CD8-positive, alpha-beta T cell (primary cell): ENCODE measurements at regions of chr16 and their contacts with region 1.

Region 1: GRCh38 chr16:70523076-70523742 is at the start of gene COG4:
- DNase-seq: peak; percentile 83 to 95 (median 90)
- ATAC-seq: peak; percentile 80
- H3K4me3 ChIP-seq: peak within 1 kb of the TSS; percentile 73 to 97
- H3K4me3 Mint-ChIP-seq: peak within 1 kb of the TSS; percentile 99
- H3K27ac ChIP-seq: peak within 1 kb of the TSS; percentile 88 to 98
- H3K27ac Mint-ChIP-seq: peak within 1 kb of the TSS; percentile 100
- H3K4me1 ChIP-seq: peaks cover 39% of the 10 kb centered on the region
- H3K4me1 Mint-ChIP-seq: peaks cover 54% of the 10 kb centered on the region
- H3K27me3 ChIP-seq: no peaks in the 10 kb centered on the region
- H3K27me3 Mint-ChIP-seq: no peaks in the 10 kb centered on the region
- CTCF ChIP-seq: no peak
- total RNA-seq, gene COG4: 19.7 to 21.0 TPM

Region 2: DNA sequence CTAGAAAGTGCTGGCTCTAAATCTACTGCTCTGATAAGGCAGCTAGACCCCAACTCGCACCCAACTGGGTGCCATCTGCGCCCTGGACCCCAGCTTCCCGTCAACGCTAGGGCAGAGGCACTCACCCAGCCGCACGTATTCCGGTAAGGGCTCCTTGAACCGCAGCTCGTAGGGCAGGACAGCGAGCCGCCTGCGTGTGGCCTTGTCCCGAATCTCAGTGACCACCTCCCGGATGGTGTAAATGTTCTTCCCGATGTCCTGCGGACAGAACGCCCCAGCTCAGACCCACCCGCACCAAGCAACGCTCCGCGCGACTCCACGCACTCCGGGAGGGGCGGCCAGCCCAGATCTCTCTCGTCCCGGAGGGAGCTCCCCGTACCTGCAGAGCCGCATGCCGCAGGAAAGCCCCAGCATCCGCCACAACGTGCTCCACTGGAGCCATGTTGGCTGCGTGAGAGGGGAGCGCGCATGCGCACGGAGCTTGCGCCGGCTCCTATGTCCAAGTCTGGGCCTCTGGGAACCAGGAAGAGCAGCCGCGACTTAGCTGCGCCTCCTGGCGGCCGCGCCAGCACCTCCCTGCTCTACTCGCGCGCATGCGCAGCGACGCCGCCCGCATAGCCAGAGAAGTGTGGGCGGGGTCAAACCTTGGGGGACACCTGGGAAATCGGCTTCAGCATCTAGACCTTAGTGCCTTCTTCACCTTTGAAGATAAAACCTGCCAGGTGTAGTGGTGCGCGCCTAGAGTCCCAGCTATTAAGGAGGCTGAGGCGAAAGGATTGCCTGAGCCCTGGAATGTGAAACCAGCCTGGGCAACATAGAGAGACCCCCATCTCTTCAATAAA is 768.5 kb before region 1 on chr16 and contains the start of gene NOB1:
- CTCF ChIA-PET with region 1: no interaction called
- POLR2A ChIA-PET with region 1: no interaction called
- intact Hi-C with region 1: loop called in 1 of 2 experiments (anchors 5 kb)
- DNase-seq: peak; percentile 94 to 100 (median 98)
- ATAC-seq: peak; percentile 97
- H3K4me3 ChIP-seq: peak within 1 kb of the TSS; percentile 91 to 100
- H3K4me3 Mint-ChIP-seq: peak within 1 kb of the TSS; percentile 100
- H3K27ac ChIP-seq: peak within 1 kb of the TSS; percentile 78 to 84
- H3K27ac Mint-ChIP-seq: peak within 1 kb of the TSS; percentile 98
- H3K4me1 ChIP-seq: peaks cover 9% of the 10 kb centered on the region
- H3K4me1 Mint-ChIP-seq: peaks cover 29% of the 10 kb centered on the region
- H3K27me3 ChIP-seq: no peaks in the 10 kb centered on the region
- H3K27me3 Mint-ChIP-seq: no peaks in the 10 kb centered on the region
- CTCF ChIP-seq: peak; percentile 79
- total RNA-seq, gene NOB1: 46.4 to 48.0 TPM

Region 3: DNA sequence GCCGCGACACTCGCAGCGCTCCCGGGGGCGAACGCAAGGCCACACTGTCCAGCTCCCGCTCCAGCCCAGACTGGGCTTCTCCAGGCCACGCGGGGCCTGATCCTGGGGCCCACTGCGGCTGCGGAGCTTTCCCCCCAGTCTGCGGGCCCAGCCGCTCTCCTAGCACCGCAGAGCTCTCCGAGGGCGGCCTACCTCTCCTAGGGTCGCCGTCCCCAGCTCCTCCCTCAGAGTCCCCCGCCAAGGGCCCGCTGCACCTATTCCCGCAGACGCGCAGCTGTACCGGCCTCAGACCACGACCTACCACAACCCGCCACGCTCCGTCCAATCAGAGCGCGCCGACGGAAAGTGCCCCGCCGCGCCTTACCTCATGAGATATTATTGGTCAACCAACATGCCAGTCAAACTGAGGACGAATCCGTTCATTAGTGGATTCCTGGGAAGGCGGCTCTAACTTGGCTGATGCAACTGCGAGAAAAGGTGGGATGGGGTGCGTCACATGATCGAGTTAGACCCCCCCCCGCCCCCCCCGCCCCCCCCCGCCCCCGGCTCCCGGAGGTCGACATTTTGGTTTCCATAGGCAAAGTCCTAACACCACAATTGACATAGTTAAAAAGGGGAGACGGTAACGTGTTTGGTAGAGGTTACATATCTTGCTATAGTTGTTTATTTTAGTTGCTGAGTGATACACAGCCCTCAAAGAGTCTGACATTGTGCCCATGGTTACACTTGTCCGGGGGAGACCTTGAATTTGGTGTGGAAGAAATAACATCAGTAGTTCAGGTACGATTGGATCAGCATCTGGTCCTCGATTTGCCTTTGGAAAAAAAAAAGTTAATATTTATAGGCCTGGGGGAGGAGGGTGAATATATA is 233.7 kb before region 1 on chr16 and contains the start of gene AARS1:
- CTCF ChIA-PET with region 1: no interaction called
- POLR2A ChIA-PET with region 1: interaction called, 4 read pairs
- intact Hi-C with region 1: loop called (anchors 2 kb)
- DNase-seq: peak; percentile 87 to 99 (median 92)
- ATAC-seq: peak; percentile 93
- H3K4me3 ChIP-seq: peak within 1 kb of the TSS; percentile 75 to 81
- H3K4me3 Mint-ChIP-seq: peak within 1 kb of the TSS; percentile 100
- H3K27ac ChIP-seq: peak within 1 kb of the TSS; percentile 89 to 94
- H3K27ac Mint-ChIP-seq: peak within 1 kb of the TSS; percentile 99
- H3K4me1 ChIP-seq: peaks cover 10% of the 10 kb centered on the region
- H3K4me1 Mint-ChIP-seq: peaks cover 18% of the 10 kb centered on the region
- H3K27me3 ChIP-seq: no peaks in the 10 kb centered on the region
- H3K27me3 Mint-ChIP-seq: no peaks in the 10 kb centered on the region
- CTCF ChIP-seq: no peak
- total RNA-seq, gene AARS1: 10.1 to 10.6 TPM

Region 4: GRCh38 chr16:70348991-70349390 is 174.2 kb before region 1 on chr16:
- CTCF ChIA-PET with region 1: no interaction called
- POLR2A ChIA-PET with region 1: interaction called, 22 read pairs
- intact Hi-C with region 1: loop called (anchors 1 kb)
- DNase-seq: no peak
- ATAC-seq: no peak
- H3K4me3 ChIP-seq: no peak overlapping the region
- H3K4me3 Mint-ChIP-seq: no peak overlapping the region
- H3K27ac ChIP-seq: no peak overlapping the region
- H3K27ac Mint-ChIP-seq: peak overlapping the region; percentile 20
- H3K4me1 ChIP-seq: peaks cover 23% of the 10 kb centered on the region
- H3K4me1 Mint-ChIP-seq: peaks cover 33% of the 10 kb centered on the region
- H3K27me3 ChIP-seq: no peaks in the 10 kb centered on the region
- H3K27me3 Mint-ChIP-seq: no peaks in the 10 kb centered on the region
- CTCF ChIP-seq: no peak

Region 5: DNA sequence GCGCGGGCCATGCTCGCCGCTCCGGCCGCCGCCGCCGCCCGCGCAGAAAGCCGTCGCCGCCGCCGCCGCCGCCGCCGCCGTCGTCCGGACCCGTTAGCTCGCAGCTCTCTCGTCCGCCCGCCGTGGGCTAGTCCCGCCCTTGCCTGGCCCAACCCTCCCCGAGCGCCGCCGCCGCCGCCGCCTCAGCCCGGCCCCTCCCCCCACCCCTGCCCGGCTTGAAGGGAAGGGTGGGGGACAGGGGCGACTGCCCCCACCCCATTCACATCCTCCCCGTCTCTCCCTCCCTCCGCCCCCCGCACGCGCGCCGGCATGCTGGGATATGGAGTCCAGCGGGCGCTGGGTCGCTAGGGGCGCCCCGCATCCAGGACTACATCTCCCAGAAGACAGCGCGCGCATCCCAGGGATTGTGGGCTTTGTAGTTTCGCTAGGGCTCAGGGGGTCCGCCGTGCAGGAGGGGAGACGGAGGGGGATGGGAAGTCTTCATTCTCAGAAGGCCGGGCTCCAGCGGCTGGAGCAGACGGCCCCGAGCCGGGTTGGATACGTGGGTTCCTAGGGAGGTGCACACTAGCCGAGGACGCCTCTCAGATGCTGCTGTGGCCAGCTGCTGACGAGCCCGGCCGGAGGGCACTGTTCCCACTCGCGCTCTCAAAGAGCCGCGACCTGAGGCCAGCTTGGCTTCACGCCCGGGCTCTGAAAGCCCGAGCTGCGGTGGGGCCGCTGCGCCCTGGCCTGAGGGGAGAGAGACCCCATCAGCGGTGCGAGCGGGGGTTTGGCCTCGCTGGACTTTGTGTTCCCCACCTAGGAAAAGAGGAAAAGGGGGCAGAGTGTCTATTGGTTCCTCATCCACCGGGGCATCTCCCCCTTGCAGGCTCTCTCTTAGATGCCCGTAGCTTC is 84.0 kb before region 1 on chr16 and contains the start of gene ST3GAL2:
- CTCF ChIA-PET with region 1: no interaction called
- POLR2A ChIA-PET with region 1: interaction called, 5 read pairs
- intact Hi-C with region 1: loop called (anchors 1 to 2 kb)
- DNase-seq: peak; percentile 87 to 97 (median 94)
- ATAC-seq: peak; percentile 97
- H3K4me3 ChIP-seq: peak within 1 kb of the TSS; percentile 75 to 91
- H3K4me3 Mint-ChIP-seq: peak within 1 kb of the TSS; percentile 94
- H3K27ac ChIP-seq: peak within 1 kb of the TSS; percentile 48 to 65
- H3K27ac Mint-ChIP-seq: peak within 1 kb of the TSS; percentile 89
- H3K4me1 ChIP-seq: peaks cover 36% of the 10 kb centered on the region
- H3K4me1 Mint-ChIP-seq: peaks cover 39% of the 10 kb centered on the region
- H3K27me3 ChIP-seq: no peaks in the 10 kb centered on the region
- H3K27me3 Mint-ChIP-seq: no peaks in the 10 kb centered on the region
- CTCF ChIP-seq: no peak
- total RNA-seq, gene ST3GAL2: 5.6 to 6.1 TPM

Region 6: GRCh38 chr16:70737377-70738082 is 214.3 kb after region 1 on chr16:
- CTCF ChIA-PET with region 1: no interaction called
- POLR2A ChIA-PET with region 1: no interaction called
- intact Hi-C with region 1: loop called in 1 of 2 experiments (anchors 5 kb)
- DNase-seq: peak; percentile 56 to 93 (median 78)
- ATAC-seq: peak; percentile 82
- H3K4me3 ChIP-seq: peak overlapping the region; percentile 33 to 34
- H3K4me3 Mint-ChIP-seq: peak overlapping the region; percentile 77
- H3K27ac ChIP-seq: peak overlapping the region; percentile 89 to 92
- H3K27ac Mint-ChIP-seq: peak overlapping the region; percentile 100
- H3K4me1 ChIP-seq: peaks cover 67% of the 10 kb centered on the region
- H3K4me1 Mint-ChIP-seq: peaks cover 65% of the 10 kb centered on the region
- H3K27me3 ChIP-seq: no peaks in the 10 kb centered on the region
- H3K27me3 Mint-ChIP-seq: no peaks in the 10 kb centered on the region
- CTCF ChIP-seq: no peak

Region 7: DNA sequence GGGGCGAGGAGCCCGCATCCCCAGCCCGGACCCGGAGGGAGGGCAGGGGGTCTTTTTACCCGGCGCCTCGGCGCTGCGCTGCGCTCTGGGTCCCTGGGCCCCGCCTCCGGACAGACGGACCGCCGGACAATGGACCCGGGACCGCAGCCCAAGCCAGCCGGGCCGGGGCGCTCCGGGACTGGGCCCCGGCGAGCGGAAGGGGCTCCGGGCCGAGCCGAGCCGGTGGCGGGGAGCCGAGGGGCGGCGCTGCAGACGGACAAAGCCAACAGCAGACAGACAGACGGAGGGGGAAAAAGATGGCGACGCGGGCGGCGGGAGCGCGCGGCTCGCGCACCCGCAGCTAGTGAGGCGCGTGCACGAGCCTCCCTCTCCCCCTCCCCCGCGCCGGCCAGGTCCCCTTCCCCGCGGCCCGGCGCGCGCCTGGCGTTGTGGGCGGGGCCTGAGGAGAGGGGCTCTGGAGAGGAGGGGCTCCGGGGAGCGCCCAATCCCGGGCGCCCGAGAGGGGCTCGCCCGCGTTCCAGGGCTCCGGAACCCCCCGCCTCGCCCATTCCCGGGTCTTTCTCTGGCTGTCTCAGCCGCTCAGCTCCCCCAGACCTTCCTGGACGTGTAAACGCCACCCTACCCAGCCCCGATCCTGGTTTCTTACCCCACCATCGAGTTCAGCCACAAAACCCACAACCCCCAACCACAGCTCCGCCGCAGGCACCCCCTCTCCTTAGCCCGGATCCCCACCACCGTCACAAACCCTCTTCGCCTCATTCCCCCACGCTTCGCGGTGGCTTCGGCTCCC is 1360.8 kb after region 1 on chr16 and contains the start of gene ZNF821:
- CTCF ChIA-PET with region 1: no interaction called
- POLR2A ChIA-PET with region 1: no interaction called
- intact Hi-C with region 1: loop called in 1 of 2 experiments (anchors 10 kb)
- DNase-seq: peak; percentile 48 to 92 (median 72)
- ATAC-seq: peak; percentile 48
- H3K4me3 ChIP-seq: peak within 1 kb of the TSS; percentile 80 to 81
- H3K4me3 Mint-ChIP-seq: peak within 1 kb of the TSS; percentile 94
- H3K27ac ChIP-seq: peak within 1 kb of the TSS; percentile 47 to 83
- H3K27ac Mint-ChIP-seq: peak within 1 kb of the TSS; percentile 95
- H3K4me1 ChIP-seq: peaks cover 39% of the 10 kb centered on the region
- H3K4me1 Mint-ChIP-seq: peaks cover 51% of the 10 kb centered on the region
- H3K27me3 ChIP-seq: no peaks in the 10 kb centered on the region
- H3K27me3 Mint-ChIP-seq: no peaks in the 10 kb centered on the region
- CTCF ChIP-seq: no peak
- total RNA-seq, gene ZNF821: 8.4 to 10.1 TPM